Caco-2 (cell line): ENCODE measurements at regions of chr11 and their contacts with region 1.

Region 1: GRCh38 chr11:72024069-72024754 is 25.5 kb downstream of the IL18BP start:
- DNase-seq: no peak
- H3K4me3 ChIP-seq: no peak overlapping the region
- H3K4me3 Mint-ChIP-seq: no peak overlapping the region
- H3K27ac Mint-ChIP-seq: no peak overlapping the region
- H3K4me1 ChIP-seq: 0 out of 2 replicates have a peak, but pooled peaks cover 4% of the 10 kb centered on the region
- H3K4me1 Mint-ChIP-seq: peaks cover 8% of the 10 kb centered on the region
- H3K27me3 ChIP-seq: no peaks in the 10 kb centered on the region
- H3K27me3 Mint-ChIP-seq: no peaks in the 10 kb centered on the region
- CTCF ChIP-seq: no peak

Region 2: GRCh38 chr11:72072348-72072747 is 48.1 kb after region 1 on chr11:
- CTCF ChIA-PET with region 1: interaction called, 16 read pairs
- POLR2A ChIA-PET with region 1: no interaction called
- intact Hi-C with region 1: no loop called
- DNase-seq: peak; percentile 61 to 65
- H3K4me3 ChIP-seq: no peak overlapping the region
- H3K4me3 Mint-ChIP-seq: no peak overlapping the region
- H3K27ac Mint-ChIP-seq: peak overlapping the region; percentile 50
- H3K4me1 ChIP-seq: peaks cover 26% of the 10 kb centered on the region
- H3K4me1 Mint-ChIP-seq: peaks cover 31% of the 10 kb centered on the region
- H3K27me3 ChIP-seq: no peaks in the 10 kb centered on the region
- H3K27me3 Mint-ChIP-seq: no peaks in the 10 kb centered on the region
- CTCF ChIP-seq: no peak

Region 3: DNA sequence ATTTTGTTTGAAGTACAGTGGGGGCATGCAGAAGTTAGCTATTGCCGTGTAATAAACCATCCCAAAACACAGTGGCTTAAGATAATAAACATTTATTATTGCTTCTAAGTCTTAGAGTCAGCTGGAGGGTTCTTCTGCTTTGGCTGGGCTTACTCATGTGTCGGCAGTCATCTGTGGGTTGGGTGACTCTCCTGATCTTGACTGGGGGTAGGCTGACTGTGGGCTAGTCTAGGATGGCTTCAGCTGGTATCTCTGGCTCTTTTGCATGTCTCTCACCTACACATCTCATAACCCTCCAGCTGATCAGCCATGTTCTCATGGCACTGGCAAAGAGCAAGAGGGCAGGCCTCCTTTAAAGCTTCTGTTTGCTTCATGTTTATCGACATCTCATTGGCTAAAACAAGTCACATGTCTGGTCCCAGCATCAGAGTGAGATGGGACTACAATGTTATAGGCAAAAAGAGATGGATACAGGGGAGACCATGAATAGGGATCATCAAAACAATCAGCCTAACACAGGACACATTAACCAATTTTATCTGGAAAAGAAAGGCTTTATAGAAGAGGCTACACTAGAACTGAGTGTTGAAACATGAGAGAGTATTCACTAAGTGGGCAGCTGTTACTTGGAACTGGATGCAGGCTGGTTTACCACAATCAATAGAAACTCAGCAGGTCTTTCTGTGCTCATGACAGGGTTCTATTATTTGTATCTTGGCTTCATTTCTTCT is 61.6 kb after region 1 on chr11:
- CTCF ChIA-PET with region 1: interaction called, 158 read pairs
- POLR2A ChIA-PET with region 1: interaction called, 13 read pairs
- intact Hi-C with region 1: loop called (anchors 2 kb)
- DNase-seq: no peak
- H3K4me3 ChIP-seq: no peak overlapping the region
- H3K4me3 Mint-ChIP-seq: no peak overlapping the region
- H3K27ac Mint-ChIP-seq: no peak overlapping the region
- H3K4me1 ChIP-seq: peaks cover 10% of the 10 kb centered on the region
- H3K4me1 Mint-ChIP-seq: peaks cover 17% of the 10 kb centered on the region
- H3K27me3 ChIP-seq: no peaks in the 10 kb centered on the region
- H3K27me3 Mint-ChIP-seq: no peaks in the 10 kb centered on the region
- CTCF ChIP-seq: no peak

Region 4: GRCh38 chr11:72112321-72113219 is 88.4 kb after region 1 on chr11 and contains the start of gene ANAPC15:
- CTCF ChIA-PET with region 1: interaction called, 10 read pairs
- POLR2A ChIA-PET with region 1: interaction called, 3 read pairs
- intact Hi-C with region 1: loop called (anchors 1 kb)
- DNase-seq: peak; percentile 99 to 100
- H3K4me3 ChIP-seq: peak within 1 kb of the TSS; percentile 52
- H3K4me3 Mint-ChIP-seq: peak within 1 kb of the TSS; percentile 94
- H3K27ac Mint-ChIP-seq: peak within 1 kb of the TSS; percentile 100
- H3K4me1 ChIP-seq: peaks cover 9% of the 10 kb centered on the region
- H3K4me1 Mint-ChIP-seq: no peaks in the 10 kb centered on the region
- H3K27me3 ChIP-seq: no peaks in the 10 kb centered on the region
- H3K27me3 Mint-ChIP-seq: no peaks in the 10 kb centered on the region
- CTCF ChIP-seq: no peak
- total RNA-seq, gene ANAPC15: 98.6 and 105 TPM in 2 replicates

Region 5: GRCh38 chr11:72238040-72238450 is 213.8 kb after region 1 on chr11:
- CTCF ChIA-PET with region 1: interaction called, 15 read pairs
- POLR2A ChIA-PET with region 1: no interaction called
- intact Hi-C with region 1: loop called (anchors 2 kb)
- DNase-seq: peak; percentile 68 to 72
- H3K4me3 ChIP-seq: no peak overlapping the region
- H3K4me3 Mint-ChIP-seq: no peak overlapping the region
- H3K27ac Mint-ChIP-seq: no peak overlapping the region
- H3K4me1 ChIP-seq: peaks cover 24% of the 10 kb centered on the region
- H3K4me1 Mint-ChIP-seq: peaks cover 14% of the 10 kb centered on the region
- H3K27me3 ChIP-seq: no peaks in the 10 kb centered on the region
- H3K27me3 Mint-ChIP-seq: no peaks in the 10 kb centered on the region
- CTCF ChIP-seq: peak; percentile 65 to 72